Natural killer cell (primary cell): ENCODE measurements at regions of chr3 and their contacts with region 1.

Region 1: DNA sequence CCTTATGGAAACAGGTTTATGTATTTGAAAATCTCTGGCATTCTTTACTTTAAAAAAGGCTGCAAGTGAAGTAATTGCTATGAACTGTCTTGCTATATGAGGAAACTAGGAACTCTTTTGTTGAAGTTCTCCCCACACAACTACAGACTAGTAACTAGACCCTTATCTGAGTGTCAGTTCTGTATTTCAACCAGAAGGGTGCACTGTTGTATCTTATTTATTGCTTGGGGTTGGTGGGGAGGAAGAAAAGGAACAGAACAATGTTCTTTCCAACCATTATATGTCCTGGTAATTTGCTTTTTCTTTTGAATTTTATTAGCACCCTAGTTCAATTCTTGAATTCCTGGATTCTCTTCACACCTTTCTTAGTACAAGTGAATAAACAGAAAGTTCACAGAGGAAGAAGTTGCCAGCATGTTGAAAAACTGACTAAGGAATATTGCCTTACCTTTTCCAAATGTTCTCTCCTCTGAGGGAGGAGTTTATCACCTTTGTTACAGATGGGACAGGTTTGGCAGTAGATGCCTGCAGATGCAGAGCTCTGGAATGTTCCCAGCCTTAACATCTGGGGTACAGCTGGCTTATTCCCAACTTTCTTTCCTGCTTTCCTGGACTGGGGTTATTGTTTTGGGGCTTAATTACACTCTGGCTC is 162.4 kb upstream of the CFAP20DC start:
- DNase-seq: peak in 1 of 2 donors; percentile 67
- ATAC-seq: peak; percentile 64 to 83 (median 77)
- H3K4me3 ChIP-seq: no peak overlapping the region
- H3K4me3 Mint-ChIP-seq: no peak overlapping the region
- H3K27ac ChIP-seq: no peak overlapping the region
- H3K27ac Mint-ChIP-seq: no peak overlapping the region
- H3K4me1 ChIP-seq: no peaks in the 10 kb centered on the region
- H3K4me1 Mint-ChIP-seq: no peaks in the 10 kb centered on the region
- H3K27me3 ChIP-seq: no peaks in the 10 kb centered on the region
- H3K27me3 Mint-ChIP-seq: peaks cover 5 to 21% of the 10 kb centered on the region in 2 donors
- CTCF ChIP-seq: peak; percentile 67

Region 2: GRCh38 chr3:59161048-59161447 is 51.2 kb before region 1 on chr3:
- intact Hi-C with region 1: no loop called
- DNase-seq: no peak
- ATAC-seq: no peak
- H3K4me3 ChIP-seq: no peak overlapping the region
- H3K4me3 Mint-ChIP-seq: no peak overlapping the region
- H3K27ac ChIP-seq: no peak overlapping the region
- H3K27ac Mint-ChIP-seq: no peak overlapping the region
- H3K4me1 ChIP-seq: no peaks in the 10 kb centered on the region
- H3K4me1 Mint-ChIP-seq: no peaks in the 10 kb centered on the region
- H3K27me3 ChIP-seq: no peaks in the 10 kb centered on the region
- H3K27me3 Mint-ChIP-seq: peaks cover 2 to 8% of the 10 kb centered on the region in 2 donors
- CTCF ChIP-seq: no peak

Region 3: GRCh38 chr3:59171491-59171890 is 40.8 kb before region 1 on chr3:
- intact Hi-C with region 1: no loop called
- DNase-seq: no peak
- ATAC-seq: no peak
- H3K4me3 ChIP-seq: no peak overlapping the region
- H3K4me3 Mint-ChIP-seq: no peak overlapping the region
- H3K27ac ChIP-seq: no peak overlapping the region
- H3K27ac Mint-ChIP-seq: no peak overlapping the region
- H3K4me1 ChIP-seq: no peaks in the 10 kb centered on the region
- H3K4me1 Mint-ChIP-seq: no peaks in the 10 kb centered on the region
- H3K27me3 ChIP-seq: no peaks in the 10 kb centered on the region
- H3K27me3 Mint-ChIP-seq: peaks cover 0 to 1% of the 10 kb centered on the region in 2 donors
- CTCF ChIP-seq: no peak

Region 4: DNA sequence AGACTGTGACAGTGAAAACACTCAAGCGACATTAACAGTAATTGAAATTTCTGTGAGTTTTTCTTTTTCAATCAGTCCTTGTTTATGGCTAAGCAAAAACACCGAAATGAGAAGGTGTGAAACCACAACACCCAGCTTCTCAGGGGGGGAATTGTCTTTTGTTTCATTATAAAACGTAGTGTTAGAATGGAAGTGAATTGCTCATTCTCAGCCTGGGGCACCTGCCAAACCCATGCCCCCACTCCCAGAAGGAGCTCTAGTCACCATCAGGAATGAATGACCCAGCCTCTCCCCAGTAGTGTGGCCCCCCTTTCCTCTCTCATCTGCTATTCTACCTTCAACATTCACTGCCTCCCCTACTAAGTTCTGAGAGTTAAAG is 23.4 kb after region 1 on chr3:
- intact Hi-C with region 1: no loop called
- DNase-seq: peak in 1 of 2 donors; percentile 55
- ATAC-seq: peak; percentile 76 to 91 (median 85)
- H3K4me3 ChIP-seq: no peak overlapping the region
- H3K4me3 Mint-ChIP-seq: peak overlapping the region; percentile 2
- H3K27ac ChIP-seq: no peak overlapping the region
- H3K27ac Mint-ChIP-seq: peak overlapping the region in 1 of 2 donors; percentile 29
- H3K4me1 ChIP-seq: peaks cover 12% of the 10 kb centered on the region
- H3K4me1 Mint-ChIP-seq: peaks cover 15% of the 10 kb centered on the region in 2 donors
- H3K27me3 ChIP-seq: no peaks in the 10 kb centered on the region
- H3K27me3 Mint-ChIP-seq: peaks cover 43 to 52% of the 10 kb centered on the region in 2 donors
- CTCF ChIP-seq: no peak

Region 5: GRCh38 chr3:59809710-59810444 is 597.6 kb after region 1 on chr3:
- intact Hi-C with region 1: loop called (anchors 5 kb)
- DNase-seq: peak in 1 of 2 donors; percentile 33
- ATAC-seq: peak in 1 of 3 donors; percentile 26
- H3K4me3 ChIP-seq: no peak overlapping the region
- H3K4me3 Mint-ChIP-seq: no peak overlapping the region
- H3K27ac ChIP-seq: no peak overlapping the region
- H3K27ac Mint-ChIP-seq: no peak overlapping the region
- H3K4me1 ChIP-seq: peaks cover 3% of the 10 kb centered on the region
- H3K4me1 Mint-ChIP-seq: peaks cover 0 to 7% of the 10 kb centered on the region in 2 donors
- H3K27me3 ChIP-seq: no peaks in the 10 kb centered on the region
- H3K27me3 Mint-ChIP-seq: peaks cover 0 to 2% of the 10 kb centered on the region in 2 donors
- CTCF ChIP-seq: peak; percentile 24

Region 6: DNA sequence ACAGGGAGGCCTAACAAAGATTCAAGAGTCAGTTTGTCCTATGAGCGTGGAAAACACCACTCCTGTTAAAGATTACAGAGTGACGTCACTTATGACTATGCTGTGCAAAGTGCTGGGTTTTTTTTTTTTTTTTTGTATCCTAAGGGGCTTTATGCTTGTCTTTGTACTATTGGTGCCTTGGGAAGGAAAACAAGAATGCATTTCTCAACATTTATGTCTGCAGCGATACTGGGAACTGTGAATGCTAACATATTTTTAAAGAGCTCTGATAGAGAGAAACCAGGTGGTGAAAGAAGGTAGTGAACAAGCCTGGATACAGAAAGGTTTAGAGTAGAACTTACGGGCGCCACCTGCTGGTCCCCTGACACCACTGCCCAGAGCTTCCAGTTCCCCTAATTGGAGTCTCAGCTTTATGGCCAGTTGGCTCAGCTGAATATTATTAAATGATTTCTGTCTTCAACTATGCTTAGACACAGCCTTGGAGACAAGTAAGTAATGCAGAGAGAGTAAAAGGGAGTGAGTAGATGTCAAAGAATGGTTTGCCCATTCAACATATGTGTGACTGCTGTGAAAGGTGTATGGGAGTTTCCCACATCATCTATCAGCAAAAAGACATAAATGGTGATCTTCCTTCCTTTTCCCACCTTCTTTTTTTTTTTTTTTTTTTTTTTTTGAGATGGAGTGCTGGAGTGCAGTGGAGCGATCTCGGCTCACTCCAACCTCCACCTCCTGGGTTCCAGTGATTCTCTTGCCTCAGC is 645.5 kb after region 1 on chr3:
- intact Hi-C with region 1: loop called (anchors 1 kb)
- DNase-seq: peak; percentile 65 to 86
- ATAC-seq: peak; percentile 83 to 99 (median 96)
- H3K4me3 ChIP-seq: no peak overlapping the region
- H3K4me3 Mint-ChIP-seq: peak overlapping the region; percentile 61
- H3K27ac ChIP-seq: no peak overlapping the region
- H3K27ac Mint-ChIP-seq: no peak overlapping the region
- H3K4me1 ChIP-seq: no peaks in the 10 kb centered on the region
- H3K4me1 Mint-ChIP-seq: peaks cover 5 to 10% of the 10 kb centered on the region in 2 donors
- H3K27me3 ChIP-seq: no peaks in the 10 kb centered on the region
- H3K27me3 Mint-ChIP-seq: no peaks in the 10 kb centered on the region
- CTCF ChIP-seq: peak; percentile 90

Region 7: GRCh38 chr3:60263191-60263590 is 1050.9 kb after region 1 on chr3:
- intact Hi-C with region 1: loop called (anchors 5 kb)
- DNase-seq: no peak
- ATAC-seq: no peak
- H3K4me3 ChIP-seq: no peak overlapping the region
- H3K4me3 Mint-ChIP-seq: no peak overlapping the region
- H3K27ac ChIP-seq: no peak overlapping the region
- H3K27ac Mint-ChIP-seq: no peak overlapping the region
- H3K4me1 ChIP-seq: no peaks in the 10 kb centered on the region
- H3K4me1 Mint-ChIP-seq: no peaks in the 10 kb centered on the region
- H3K27me3 ChIP-seq: peaks cover 3% of the 10 kb centered on the region
- H3K27me3 Mint-ChIP-seq: peaks cover 0 to 5% of the 10 kb centered on the region in 2 donors
- CTCF ChIP-seq: no peak